ENCODE measurements at regions of chr1 and their contacts with region 1.

Region 1: DNA sequence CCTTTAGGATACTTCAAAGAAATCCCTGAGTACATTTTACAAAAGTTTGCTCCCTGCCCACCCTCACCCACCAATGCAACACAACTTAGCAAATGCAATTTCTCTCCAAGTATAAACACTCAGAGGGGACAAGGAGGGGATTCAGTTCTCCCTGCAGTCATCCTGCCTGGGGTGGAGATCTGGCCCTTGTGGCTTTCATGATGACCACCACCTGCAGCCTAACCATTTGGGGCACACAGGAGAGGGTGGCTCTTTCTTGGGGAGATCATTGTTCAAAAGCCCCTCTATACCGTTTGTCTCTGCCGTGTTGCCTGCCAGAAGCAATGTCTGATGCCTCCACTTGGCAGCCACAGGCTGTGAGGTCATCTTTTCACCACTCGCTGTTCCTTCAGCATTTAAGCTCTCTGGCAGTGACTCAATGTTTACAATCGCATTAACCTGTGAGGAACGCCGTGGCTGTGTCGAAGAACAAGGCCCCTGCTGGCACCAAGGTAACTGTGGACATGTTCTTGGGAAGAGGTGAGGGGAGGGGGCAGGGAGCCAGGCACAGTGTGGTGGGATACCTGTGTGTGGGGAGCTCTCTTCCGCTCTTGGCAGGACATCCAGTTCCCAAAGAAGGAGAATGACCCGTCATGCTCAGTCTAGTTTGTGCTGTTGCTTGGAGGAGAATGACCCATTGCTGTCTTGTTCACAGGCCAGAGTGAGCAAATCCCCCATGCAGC is 103.9 kb upstream of the DUSP10 start:
- DNase-seq: peak in 1 of 2 experiments; percentile 35
- H3K4me3 ChIP-seq: no peak overlapping the region
- H3K27ac ChIP-seq: no peak overlapping the region
- H3K4me1 ChIP-seq: peaks cover 4% of the 10 kb centered on the region
- H3K27me3 ChIP-seq: no peaks in the 10 kb centered on the region
- CTCF ChIP-seq: no peak

Region 2: DNA sequence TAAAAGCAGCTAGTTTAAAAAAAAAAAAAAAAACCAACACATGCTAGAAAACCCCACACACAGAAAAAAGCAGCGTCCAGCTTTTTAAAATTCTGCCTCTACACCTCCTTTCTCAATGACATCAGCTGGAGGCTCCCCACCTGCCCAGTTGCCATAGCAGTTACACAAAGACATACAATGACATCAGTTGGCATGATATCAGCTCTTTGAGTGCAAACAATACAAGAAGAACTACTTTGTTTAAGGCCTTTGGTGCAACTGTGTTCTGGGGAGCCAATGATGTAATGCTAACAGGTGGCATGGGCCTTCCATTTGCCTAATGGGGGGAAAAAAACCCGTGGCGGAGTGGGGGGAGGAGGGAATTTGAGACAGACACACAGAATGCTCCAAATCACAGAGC is 136.8 kb before region 1 on chr1:
- CTCF ChIA-PET with region 1: no interaction called
- POLR2A ChIA-PET with region 1: interaction called, 12 read pairs
- intact Hi-C with region 1: no loop called
- DNase-seq: peak in 1 of 2 experiments; percentile 59
- H3K4me3 ChIP-seq: no peak overlapping the region
- H3K27ac ChIP-seq: no peak overlapping the region
- H3K4me1 ChIP-seq: peaks cover 18% of the 10 kb centered on the region
- H3K27me3 ChIP-seq: no peaks in the 10 kb centered on the region
- CTCF ChIP-seq: no peak